BJ (cell line): ENCODE measurements at regions of chr5 and their contacts with region 1.

Region 1: GRCh38 chr5:68431181-68431580 is 215.6 kb downstream of the PIK3R1 start:
- DNase-seq: no peak
- H3K4me3 ChIP-seq: no peak overlapping the region
- H3K27me3 ChIP-seq: no peaks in the 10 kb centered on the region
- CTCF ChIP-seq: no peak

Region 2: GRCh38 chr5:68419637-68420452 is 11.3 kb before region 1 on chr5:
- CTCF ChIA-PET with region 1: interaction called, 10 read pairs
- POLR2A ChIA-PET with region 1: no interaction called
- DNase-seq: no peak
- H3K4me3 ChIP-seq: no peak overlapping the region
- H3K27me3 ChIP-seq: no peaks in the 10 kb centered on the region
- CTCF ChIP-seq: no peak

Region 3: GRCh38 chr5:68898951-68899471 is 467.8 kb after region 1 on chr5:
- CTCF ChIA-PET with region 1: no interaction called
- POLR2A ChIA-PET with region 1: no interaction called
- DNase-seq: peak; percentile 55
- H3K4me3 ChIP-seq: no peak overlapping the region
- H3K27me3 ChIP-seq: no peaks in the 10 kb centered on the region
- CTCF ChIP-seq: no peak